ENCODE measurements at regions of chr4 and their contacts with region 1.

Region 1: DNA sequence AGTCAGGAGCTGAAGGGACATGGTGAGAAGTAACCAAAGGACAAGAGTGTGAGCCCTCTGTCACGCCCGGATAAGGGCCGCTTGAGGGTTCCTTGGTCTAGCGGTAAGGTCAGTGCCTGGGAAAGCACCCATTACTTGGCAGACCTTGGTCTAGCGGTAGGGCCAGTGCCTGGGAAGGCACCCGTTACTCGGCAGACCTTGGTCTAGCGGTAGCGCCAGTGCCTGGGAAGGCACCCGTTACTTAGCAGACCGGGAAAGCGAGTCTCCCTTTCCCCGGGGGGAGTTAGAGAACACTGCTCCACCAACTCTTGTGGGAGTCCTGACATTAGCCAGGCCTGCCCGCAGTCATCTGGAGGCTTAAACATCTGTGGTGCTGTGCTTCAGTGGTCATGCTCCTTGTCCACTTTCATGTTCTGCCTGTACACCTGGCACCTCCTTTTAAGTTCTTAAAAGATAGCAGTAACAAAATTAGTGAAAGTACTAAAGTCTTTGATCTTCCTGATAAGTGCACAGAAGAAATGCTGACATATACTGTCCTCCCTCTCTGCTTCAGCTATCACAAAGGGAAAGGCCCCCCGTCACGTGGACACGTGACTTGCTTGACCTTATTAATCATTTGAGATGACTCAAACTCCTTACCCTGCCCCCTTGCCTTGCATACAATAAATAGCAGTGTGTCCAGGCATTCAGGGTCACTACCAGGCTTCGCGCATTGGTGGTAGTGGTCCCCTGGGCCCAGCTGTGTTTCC is 9.3 kb upstream of the SEC24B start:
- DNase-seq: no peak
- H3K4me3 Mint-ChIP-seq: no peak overlapping the region
- H3K27ac Mint-ChIP-seq: no peak overlapping the region
- H3K4me1 Mint-ChIP-seq: no peaks in the 10 kb centered on the region
- H3K27me3 Mint-ChIP-seq: no peaks in the 10 kb centered on the region
- CTCF ChIP-seq: no peak

Region 2: GRCh38 chr4:109803924-109804571 is 379.8 kb after region 1 on chr4:
- CTCF ChIA-PET with region 1: interaction called, 10 read pairs
- POLR2A ChIA-PET with region 1: no interaction called
- intact Hi-C with region 1: loop called (anchors 1 kb)
- DNase-seq: peak; percentile 70
- H3K4me3 Mint-ChIP-seq: no peak overlapping the region
- H3K27ac Mint-ChIP-seq: no peak overlapping the region
- H3K4me1 Mint-ChIP-seq: no peaks in the 10 kb centered on the region
- H3K27me3 Mint-ChIP-seq: no peaks in the 10 kb centered on the region
- CTCF ChIP-seq: peak; percentile 41

Region 3: GRCh38 chr4:109977854-109978501 is 553.7 kb after region 1 on chr4:
- CTCF ChIA-PET with region 1: interaction called, 21 read pairs
- POLR2A ChIA-PET with region 1: no interaction called
- intact Hi-C with region 1: loop called (anchors 1 kb)
- DNase-seq: peak; percentile 47
- H3K4me3 Mint-ChIP-seq: no peak overlapping the region
- H3K27ac Mint-ChIP-seq: no peak overlapping the region
- H3K4me1 Mint-ChIP-seq: no peaks in the 10 kb centered on the region
- H3K27me3 Mint-ChIP-seq: no peaks in the 10 kb centered on the region
- CTCF ChIP-seq: peak; percentile 60

Measured in MCF 10A (cell line).